Naive thymus-derived CD4-positive, alpha-beta T cell (primary cell): ENCODE measurements at regions of chr18 and their contacts with region 1.

Region 1: GRCh38 chr18:5159080-5159479 is 38.0 kb downstream of the AKAIN1 start:
- DNase-seq: peak in 7 of 9 donors; percentile 63 to 81 (median 76)
- ATAC-seq: peak; percentile 89
- H3K4me3 ChIP-seq: no peak overlapping the region
- H3K4me3 Mint-ChIP-seq: peak overlapping the region; percentile 11 to 92 (median 73)
- H3K27ac ChIP-seq: peak overlapping the region; percentile 53
- H3K27ac Mint-ChIP-seq: peak overlapping the region; percentile 43 to 97 (median 93)
- H3K4me1 ChIP-seq: peaks cover 0 to 45% of the 10 kb centered on the region in 2 donors
- H3K4me1 Mint-ChIP-seq: peaks cover 4 to 76% (median 61%) of the 10 kb centered on the region in 7 donors
- H3K27me3 ChIP-seq: no peaks in the 10 kb centered on the region
- H3K27me3 Mint-ChIP-seq: peaks cover 0 to 4% (median 0%) of the 10 kb centered on the region in 5 donors

Region 2: GRCh38 chr18:5073026-5073944 is 85.8 kb before region 1 on chr18:
- CTCF ChIA-PET with region 1: no interaction called
- POLR2A ChIA-PET with region 1: no interaction called
- intact Hi-C with region 1: loop called in 1 of 2 experiments (anchors 2 kb)
- DNase-seq: peak in 7 of 9 donors; percentile 15 to 55 (median 39)
- ATAC-seq: peak; percentile 75
- H3K4me3 ChIP-seq: no peak overlapping the region
- H3K4me3 Mint-ChIP-seq: no peak overlapping the region
- H3K27ac ChIP-seq: no peak overlapping the region
- H3K27ac Mint-ChIP-seq: no peak overlapping the region
- H3K4me1 ChIP-seq: no peaks in the 10 kb centered on the region
- H3K4me1 Mint-ChIP-seq: peaks cover 0 to 7% (median 3%) of the 10 kb centered on the region in 7 donors
- H3K27me3 ChIP-seq: no peaks in the 10 kb centered on the region
- H3K27me3 Mint-ChIP-seq: peaks cover 0 to 4% (median under 1%) of the 10 kb centered on the region in 5 donors

Region 3: GRCh38 chr18:5122270-5122669 is 36.8 kb before region 1 on chr18:
- CTCF ChIA-PET with region 1: no interaction called
- POLR2A ChIA-PET with region 1: interaction called, 4 read pairs
- intact Hi-C with region 1: loop called in 1 of 2 experiments (anchors 5 kb)
- DNase-seq: peak in 6 of 9 donors; percentile 32 to 71 (median 53)
- ATAC-seq: peak; percentile 74
- H3K4me3 ChIP-seq: peak overlapping the region; percentile 17
- H3K4me3 Mint-ChIP-seq: peak overlapping the region in 9 of 10 donors; percentile 46 to 73 (median 58)
- H3K27ac ChIP-seq: no peak overlapping the region
- H3K27ac Mint-ChIP-seq: peak overlapping the region in 7 of 9 donors; percentile 55 to 93 (median 83)
- H3K4me1 ChIP-seq: peaks cover 0 to 10% of the 10 kb centered on the region in 2 donors
- H3K4me1 Mint-ChIP-seq: peaks cover 0 to 30% (median 21%) of the 10 kb centered on the region in 7 donors
- H3K27me3 ChIP-seq: no peaks in the 10 kb centered on the region
- H3K27me3 Mint-ChIP-seq: peaks cover 0 to 3% (median 0%) of the 10 kb centered on the region in 5 donors

Region 4: DNA sequence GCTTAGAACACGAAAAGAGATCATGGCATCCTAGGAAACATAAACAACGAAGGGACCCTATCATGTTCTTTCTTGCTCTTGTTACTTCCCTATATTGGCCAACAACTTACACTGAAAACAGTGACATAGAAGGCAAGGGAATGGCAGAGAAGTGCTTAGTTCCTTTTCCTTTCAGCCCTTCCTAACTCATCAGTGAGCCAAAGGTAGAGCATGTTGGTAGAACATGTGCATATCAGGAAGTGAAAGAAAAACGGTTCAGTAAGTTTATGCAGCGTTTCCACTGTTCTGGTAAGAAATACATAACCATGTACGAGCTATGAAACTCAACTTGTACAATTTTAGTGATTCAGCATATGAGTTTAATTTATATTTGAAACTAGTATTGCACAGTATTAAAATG is 16.3 kb after region 1 on chr18:
- CTCF ChIA-PET with region 1: no interaction called
- POLR2A ChIA-PET with region 1: interaction called, 6 read pairs
- intact Hi-C with region 1: loop called in 1 of 2 experiments (anchors 2 kb)
- DNase-seq: no peak
- ATAC-seq: no peak
- H3K4me3 ChIP-seq: no peak overlapping the region
- H3K4me3 Mint-ChIP-seq: no peak overlapping the region
- H3K27ac ChIP-seq: no peak overlapping the region
- H3K27ac Mint-ChIP-seq: no peak overlapping the region
- H3K4me1 ChIP-seq: peaks cover 0 to 11% of the 10 kb centered on the region in 2 donors
- H3K4me1 Mint-ChIP-seq: peaks cover 0 to 47% (median 21%) of the 10 kb centered on the region in 7 donors
- H3K27me3 ChIP-seq: no peaks in the 10 kb centered on the region
- H3K27me3 Mint-ChIP-seq: no peaks in the 10 kb centered on the region

Region 5: DNA sequence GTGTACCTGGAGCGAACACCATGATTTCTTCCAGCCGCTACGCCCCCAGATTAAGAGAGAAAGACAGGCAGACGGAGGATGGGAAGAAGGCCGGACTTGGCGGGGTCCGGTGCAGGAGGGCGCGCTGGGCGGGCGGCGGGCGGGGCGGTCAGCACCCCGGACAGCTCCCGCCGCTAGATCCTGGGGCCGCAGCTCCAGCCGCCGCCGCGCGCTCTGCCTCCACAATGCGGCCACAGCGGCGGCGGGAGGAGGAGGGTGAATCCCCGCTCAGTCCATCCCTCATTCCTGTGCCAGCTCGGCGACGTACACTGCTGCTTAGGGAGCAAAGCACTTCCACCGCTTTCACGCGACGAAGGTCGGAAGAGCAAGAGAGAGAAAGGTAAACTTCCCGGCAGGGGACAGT is 38.0 kb after region 1 on chr18 and contains the start of gene AKAIN1:
- CTCF ChIA-PET with region 1: no interaction called
- POLR2A ChIA-PET with region 1: no interaction called
- intact Hi-C with region 1: loop called in 1 of 2 experiments (anchors 5 kb)
- DNase-seq: peak in 7 of 9 donors; percentile 2 to 38 (median 25)
- ATAC-seq: peak; percentile 72
- H3K4me3 ChIP-seq: no peak within 1 kb of the TSS
- H3K4me3 Mint-ChIP-seq: peak within 1 kb of the TSS in 9 of 10 donors; percentile 65 to 83 (median 74)
- H3K27ac ChIP-seq: no peak within 1 kb of the TSS
- H3K27ac Mint-ChIP-seq: peak within 1 kb of the TSS in 1 of 9 donors; percentile 46
- H3K4me1 ChIP-seq: peaks cover 0 to 6% of the 10 kb centered on the region in 2 donors
- H3K4me1 Mint-ChIP-seq: peaks cover 0 to 26% (median 19%) of the 10 kb centered on the region in 7 donors
- H3K27me3 ChIP-seq: peaks cover 5 to 17% of the 10 kb centered on the region in 2 donors
- H3K27me3 Mint-ChIP-seq: peaks cover 45 to 64% (median 54%) of the 10 kb centered on the region in 5 donors
- total RNA-seq, gene AKAIN1: not detected

Region 6: GRCh38 chr18:5214583-5215351 is 55.7 kb after region 1 on chr18:
- CTCF ChIA-PET with region 1: no interaction called
- POLR2A ChIA-PET with region 1: no interaction called
- intact Hi-C with region 1: loop called in 1 of 2 experiments (anchors 1 kb)
- DNase-seq: peak in 1 of 9 donors; percentile 7
- ATAC-seq: peak; percentile 45
- H3K4me3 ChIP-seq: no peak overlapping the region
- H3K4me3 Mint-ChIP-seq: peak overlapping the region in 1 of 10 donors; percentile 26
- H3K27ac ChIP-seq: no peak overlapping the region
- H3K27ac Mint-ChIP-seq: peak overlapping the region in 2 of 9 donors; percentile 11 to 39
- H3K4me1 ChIP-seq: peaks cover 0 to 2% of the 10 kb centered on the region in 2 donors
- H3K4me1 Mint-ChIP-seq: peaks cover 0 to 27% (median 17%) of the 10 kb centered on the region in 7 donors
- H3K27me3 ChIP-seq: no peaks in the 10 kb centered on the region
- H3K27me3 Mint-ChIP-seq: peaks cover 0 to 3% (median 0%) of the 10 kb centered on the region in 5 donors

Region 7: GRCh38 chr18:5309888-5310470 is 150.9 kb after region 1 on chr18:
- CTCF ChIA-PET with region 1: no interaction called
- POLR2A ChIA-PET with region 1: interaction called, 3 read pairs
- intact Hi-C with region 1: loop called in 1 of 2 experiments (anchors 5 kb)
- DNase-seq: peak in 7 of 9 donors; percentile 32 to 67 (median 57)
- ATAC-seq: peak; percentile 92
- H3K4me3 ChIP-seq: peak overlapping the region; percentile 58
- H3K4me3 Mint-ChIP-seq: peak overlapping the region; percentile 71 to 93 (median 85)
- H3K27ac ChIP-seq: peak overlapping the region; percentile 60
- H3K27ac Mint-ChIP-seq: peak overlapping the region; percentile 80 to 97 (median 92)
- H3K4me1 ChIP-seq: peaks cover 7 to 10% of the 10 kb centered on the region in 2 donors
- H3K4me1 Mint-ChIP-seq: peaks cover 16 to 40% (median 32%) of the 10 kb centered on the region in 7 donors
- H3K27me3 ChIP-seq: no peaks in the 10 kb centered on the region
- H3K27me3 Mint-ChIP-seq: peaks cover 0 to 2% (median 0%) of the 10 kb centered on the region in 5 donors